Activated naive CD4-positive, alpha-beta T cell treated with anti-CD3 and anti-CD28 coated beads for 36 hours (primary cell): ENCODE measurements at regions of chr4 and their contacts with region 1.

Region 1: GRCh38 chr4:121156822-121157769 is 7.0 kb downstream of the TNIP3 start:
- DNase-seq: peak; percentile 42
- H3K4me3 Mint-ChIP-seq: peak overlapping the region; percentile 78
- H3K27ac Mint-ChIP-seq: no peak overlapping the region
- H3K4me1 Mint-ChIP-seq: peaks cover 43% of the 10 kb centered on the region
- H3K27me3 Mint-ChIP-seq: no peaks in the 10 kb centered on the region

Region 2: DNA sequence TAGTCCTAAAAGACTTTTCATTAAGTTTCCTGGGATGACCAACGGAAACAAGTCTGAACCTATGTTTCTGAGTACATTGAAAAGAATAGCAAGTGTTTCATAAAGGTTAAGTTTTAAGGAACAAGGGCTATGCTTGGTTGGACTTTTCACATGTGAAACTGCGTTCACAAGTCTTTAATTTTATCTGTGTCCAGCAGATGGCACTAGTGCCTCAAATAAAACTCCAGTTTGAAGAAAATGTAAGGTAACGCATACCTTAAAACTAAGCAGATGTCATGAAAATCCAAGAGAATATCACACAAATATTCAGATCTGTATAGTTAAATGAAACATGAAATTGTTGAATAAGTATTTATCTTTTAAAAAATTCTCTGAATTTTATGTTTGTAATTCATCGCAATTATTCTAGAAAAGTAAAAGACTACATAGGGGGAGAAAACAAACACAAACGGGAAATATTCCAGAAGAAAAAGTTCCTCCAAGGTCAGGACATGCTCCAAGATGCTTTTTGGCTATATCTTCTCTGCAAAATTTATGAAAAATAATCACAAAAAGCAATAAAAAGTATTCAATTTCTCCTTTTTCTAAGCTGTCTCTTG is 1000.9 kb before region 1 on chr4:
- CTCF ChIA-PET with region 1: no interaction called
- intact Hi-C with region 1: no loop called
- DNase-seq: peak; percentile 32
- H3K4me3 Mint-ChIP-seq: no peak overlapping the region
- H3K27ac Mint-ChIP-seq: no peak overlapping the region
- H3K4me1 Mint-ChIP-seq: no peaks in the 10 kb centered on the region
- H3K27me3 Mint-ChIP-seq: no peaks in the 10 kb centered on the region

Region 3: GRCh38 chr4:120902925-120903324 is 254.2 kb before region 1 on chr4:
- CTCF ChIA-PET with region 1: no interaction called
- intact Hi-C with region 1: loop called (anchors 1 kb)
- DNase-seq: peak; percentile 38
- H3K4me3 Mint-ChIP-seq: no peak overlapping the region
- H3K27ac Mint-ChIP-seq: no peak overlapping the region
- H3K4me1 Mint-ChIP-seq: peaks cover 5% of the 10 kb centered on the region
- H3K27me3 Mint-ChIP-seq: peaks cover 2% of the 10 kb centered on the region

Region 4: DNA sequence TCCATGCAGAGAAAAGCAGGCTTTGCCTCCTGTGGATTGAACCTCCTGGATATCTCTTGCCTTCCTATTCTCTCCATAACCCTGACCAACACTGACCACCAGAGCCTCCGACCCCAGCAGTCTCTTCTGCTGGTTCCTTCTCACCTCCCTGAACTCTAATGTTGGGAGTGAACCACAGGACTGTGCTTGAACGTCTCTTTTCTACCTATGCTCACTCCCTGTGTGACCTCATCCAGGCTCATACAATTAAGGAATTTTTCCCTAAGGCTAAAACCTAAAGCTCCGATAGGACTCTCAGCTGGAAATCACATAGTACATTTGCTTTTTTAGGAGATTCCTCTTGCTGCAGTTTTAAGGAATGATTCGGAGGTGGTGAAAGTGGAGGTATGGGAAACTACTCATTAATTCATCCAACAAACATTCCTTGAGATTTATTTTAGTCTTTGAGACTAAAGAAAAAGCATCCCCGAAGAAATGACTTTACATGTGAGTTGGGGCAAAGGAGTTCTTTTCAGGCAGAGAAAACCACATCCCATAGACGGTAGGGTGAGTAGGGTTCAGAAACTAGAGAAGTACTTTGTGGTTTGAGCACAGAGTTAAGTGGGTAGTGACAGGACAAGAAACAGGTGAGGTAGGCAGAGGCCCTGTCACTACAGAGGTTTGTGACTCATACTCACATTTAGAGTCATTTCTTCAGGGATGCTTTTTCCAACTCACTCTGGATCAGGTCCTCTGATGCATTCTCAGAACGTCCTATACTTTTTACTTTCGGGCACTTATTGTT is 115.6 kb before region 1 on chr4:
- CTCF ChIA-PET with region 1: no interaction called
- intact Hi-C with region 1: loop called (anchors 1 kb)
- DNase-seq: peak; percentile 53
- H3K4me3 Mint-ChIP-seq: no peak overlapping the region
- H3K27ac Mint-ChIP-seq: no peak overlapping the region
- H3K4me1 Mint-ChIP-seq: peaks cover 13% of the 10 kb centered on the region
- H3K27me3 Mint-ChIP-seq: no peaks in the 10 kb centered on the region

Region 5: DNA sequence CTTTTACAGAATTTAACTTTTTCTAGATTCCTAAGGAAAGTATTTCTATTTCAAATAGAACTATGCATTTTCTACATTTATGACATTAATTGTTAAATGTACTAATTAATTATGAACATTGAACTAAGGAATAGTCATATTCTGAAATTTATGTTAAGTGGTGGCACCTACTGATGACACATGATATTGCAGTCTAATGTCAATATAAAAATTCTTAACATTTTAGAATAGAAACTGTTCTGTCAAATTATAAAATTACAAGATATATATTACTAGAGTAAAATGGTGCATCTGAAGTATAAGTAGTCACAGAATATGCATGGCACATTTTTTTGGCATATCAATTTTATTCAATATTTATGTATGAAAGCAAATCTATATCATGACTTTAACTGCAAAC is 44.6 kb before region 1 on chr4:
- CTCF ChIA-PET with region 1: interaction called, 3 read pairs
- intact Hi-C with region 1: loop called (anchors 2 kb)
- DNase-seq: no peak
- H3K4me3 Mint-ChIP-seq: no peak overlapping the region
- H3K27ac Mint-ChIP-seq: no peak overlapping the region
- H3K4me1 Mint-ChIP-seq: peaks cover 22% of the 10 kb centered on the region
- H3K27me3 Mint-ChIP-seq: no peaks in the 10 kb centered on the region

Region 6: DNA sequence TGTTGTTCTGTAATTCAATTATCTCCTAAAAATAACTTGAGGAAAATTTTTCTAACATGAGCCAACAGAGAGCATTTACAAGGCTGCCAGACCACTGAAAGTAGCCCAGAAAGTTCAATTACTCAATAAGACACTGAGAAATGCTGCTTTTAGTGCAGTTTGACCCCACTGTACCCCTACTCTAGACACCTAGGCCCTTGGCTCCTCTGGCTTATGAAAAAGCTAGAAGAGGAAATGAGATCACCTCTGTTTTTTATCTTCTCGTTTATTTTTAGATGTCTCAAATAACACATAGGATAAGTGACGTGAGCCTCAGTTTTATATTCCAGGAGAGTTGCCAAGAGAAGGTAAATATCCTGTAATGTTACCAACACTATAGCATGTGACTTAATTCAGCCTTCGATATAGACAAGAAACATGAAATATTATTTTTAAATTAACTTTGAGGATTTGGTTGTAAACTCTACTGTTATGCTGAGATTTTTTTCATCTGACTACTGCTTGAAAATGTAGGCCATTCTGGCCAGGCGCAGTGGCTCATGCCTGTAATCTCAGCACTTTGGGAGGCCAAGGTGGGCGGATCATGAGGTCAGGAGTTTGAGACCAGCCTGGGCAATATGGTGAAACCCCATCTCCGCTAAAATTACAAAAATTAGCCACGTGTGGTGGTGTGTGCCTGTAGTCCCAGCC is 17.4 kb before region 1 on chr4:
- CTCF ChIA-PET with region 1: interaction called, 3 read pairs
- intact Hi-C with region 1: loop called (anchors 1 kb)
- DNase-seq: peak; percentile 29
- H3K4me3 Mint-ChIP-seq: no peak overlapping the region
- H3K27ac Mint-ChIP-seq: peak overlapping the region; percentile 79
- H3K4me1 Mint-ChIP-seq: peaks cover 57% of the 10 kb centered on the region
- H3K27me3 Mint-ChIP-seq: no peaks in the 10 kb centered on the region

Region 7: GRCh38 chr4:121176082-121176934 is 19.2 kb after region 1 on chr4:
- CTCF ChIA-PET with region 1: interaction called, 4 read pairs
- intact Hi-C with region 1: loop called (anchors 1 kb)
- DNase-seq: no peak
- H3K4me3 Mint-ChIP-seq: no peak overlapping the region
- H3K27ac Mint-ChIP-seq: peak overlapping the region; percentile 34
- H3K4me1 Mint-ChIP-seq: peaks cover 74% of the 10 kb centered on the region
- H3K27me3 Mint-ChIP-seq: no peaks in the 10 kb centered on the region

Region 8: GRCh38 chr4:121182296-121182695 is 25.2 kb after region 1 on chr4:
- CTCF ChIA-PET with region 1: interaction called, 3 read pairs
- intact Hi-C with region 1: loop called (anchors 1 kb)
- DNase-seq: peak; percentile 30
- H3K4me3 Mint-ChIP-seq: peak overlapping the region; percentile 71
- H3K27ac Mint-ChIP-seq: peak overlapping the region; percentile 91
- H3K4me1 Mint-ChIP-seq: peaks cover 60% of the 10 kb centered on the region
- H3K27me3 Mint-ChIP-seq: no peaks in the 10 kb centered on the region